AG04450 (cell line): ENCODE measurements at regions of chrX and their contacts with region 1.

Region 1: GRCh38 chrX:10189317-10190268 is 32.8 kb downstream of the CLCN4 start:
- DNase-seq: no peak
- H3K4me3 ChIP-seq: no peak overlapping the region
- H3K27ac ChIP-seq: no peak overlapping the region
- H3K27me3 ChIP-seq: no peaks in the 10 kb centered on the region
- CTCF ChIP-seq: peak; percentile 58

Region 2: GRCh38 chrX:10146346-10146745 is 43.2 kb before region 1 on chrX:
- CTCF ChIA-PET with region 1: no interaction called
- POLR2A ChIA-PET with region 1: no interaction called
- DNase-seq: no peak
- H3K4me3 ChIP-seq: no peak overlapping the region
- H3K27ac ChIP-seq: no peak overlapping the region
- H3K27me3 ChIP-seq: no peaks in the 10 kb centered on the region
- CTCF ChIP-seq: no peak

Region 3: GRCh38 chrX:10296576-10296975 is 107.0 kb after region 1 on chrX:
- CTCF ChIA-PET with region 1: no interaction called
- POLR2A ChIA-PET with region 1: no interaction called
- DNase-seq: peak; percentile 56
- H3K4me3 ChIP-seq: no peak overlapping the region
- H3K27ac ChIP-seq: no peak overlapping the region
- H3K27me3 ChIP-seq: no peaks in the 10 kb centered on the region
- CTCF ChIP-seq: no peak

Region 4: DNA sequence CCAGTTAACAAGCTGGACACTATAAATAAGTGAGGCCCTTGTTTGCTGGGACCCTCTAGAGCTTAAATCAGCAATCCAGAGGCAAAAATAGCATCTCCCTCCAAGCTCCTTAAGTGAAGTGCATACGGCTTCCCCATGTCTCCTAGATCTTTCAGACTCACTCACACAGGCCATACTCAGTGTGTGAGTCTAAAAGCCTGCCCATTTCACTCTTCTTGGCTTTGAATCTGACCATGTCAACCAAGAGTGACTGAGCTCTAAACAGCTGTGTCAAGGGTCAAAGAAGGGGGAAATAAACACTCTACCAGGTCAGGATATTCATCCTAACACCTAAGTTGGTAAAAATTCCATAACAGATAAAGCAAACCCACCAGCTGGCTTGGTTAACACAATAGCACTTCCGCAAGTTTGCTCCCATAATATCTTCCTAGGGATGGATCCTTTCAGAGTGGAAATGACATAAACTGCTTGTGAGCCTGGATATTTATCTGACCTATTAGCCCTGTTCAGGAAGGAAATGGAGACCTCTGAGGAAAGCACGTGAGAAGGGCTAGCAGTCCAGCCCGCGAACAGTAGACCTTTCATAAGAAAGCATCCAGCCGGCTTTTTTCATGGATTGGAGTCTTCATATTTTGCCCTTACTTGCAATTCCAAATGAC is 365.1 kb after region 1 on chrX:
- CTCF ChIA-PET with region 1: interaction called, 10 read pairs
- POLR2A ChIA-PET with region 1: no interaction called
- DNase-seq: no peak
- H3K4me3 ChIP-seq: no peak overlapping the region
- H3K27ac ChIP-seq: no peak overlapping the region
- H3K27me3 ChIP-seq: no peaks in the 10 kb centered on the region
- CTCF ChIP-seq: no peak

Region 5: GRCh38 chrX:10608099-10608498 is 418.5 kb after region 1 on chrX:
- CTCF ChIA-PET with region 1: interaction called, 11 read pairs
- POLR2A ChIA-PET with region 1: no interaction called
- DNase-seq: peak; percentile 56
- H3K4me3 ChIP-seq: no peak overlapping the region
- H3K27ac ChIP-seq: no peak overlapping the region
- H3K27me3 ChIP-seq: no peaks in the 10 kb centered on the region
- CTCF ChIP-seq: no peak

Region 6: DNA sequence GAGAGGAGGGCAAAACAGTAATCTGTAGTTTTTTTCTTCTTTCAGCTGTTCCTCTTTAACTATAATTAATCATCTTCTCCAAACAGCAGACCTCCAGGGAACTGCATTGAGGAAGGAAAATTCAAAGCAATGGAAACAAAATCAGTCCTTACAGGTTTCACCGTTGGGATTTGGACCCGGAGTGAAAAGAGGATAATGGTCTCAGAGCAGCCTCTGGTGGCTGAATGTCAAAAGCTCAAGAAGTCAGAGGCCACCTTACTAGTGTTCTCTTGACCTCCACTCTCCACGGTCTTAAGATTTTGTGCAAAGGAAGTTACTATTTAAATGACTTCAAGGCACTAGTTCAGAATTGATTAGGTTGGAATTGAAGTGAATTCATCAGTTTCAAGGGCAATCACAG is 446.7 kb after region 1 on chrX:
- CTCF ChIA-PET with region 1: interaction called, 64 read pairs
- POLR2A ChIA-PET with region 1: no interaction called
- DNase-seq: no peak
- H3K4me3 ChIP-seq: no peak overlapping the region
- H3K27ac ChIP-seq: no peak overlapping the region
- H3K27me3 ChIP-seq: no peaks in the 10 kb centered on the region
- CTCF ChIP-seq: peak; percentile 72

Region 7: GRCh38 chrX:10769195-10769594 is 579.6 kb after region 1 on chrX:
- CTCF ChIA-PET with region 1: interaction called, 19 read pairs
- POLR2A ChIA-PET with region 1: no interaction called
- DNase-seq: no peak
- H3K4me3 ChIP-seq: peak overlapping the region; percentile 41; the same call in 1 of the 2 replicates
- H3K27ac ChIP-seq: peak overlapping the region; percentile 52
- H3K27me3 ChIP-seq: no peaks in the 10 kb centered on the region
- CTCF ChIP-seq: peak; percentile 54

Region 8: GRCh38 chrX:11137543-11138139 is 948.0 kb after region 1 on chrX:
- CTCF ChIA-PET with region 1: interaction called, 65 read pairs
- POLR2A ChIA-PET with region 1: no interaction called
- DNase-seq: peak; percentile 6
- H3K4me3 ChIP-seq: no peak overlapping the region
- H3K27ac ChIP-seq: no peak overlapping the region
- H3K27me3 ChIP-seq: no peaks in the 10 kb centered on the region
- CTCF ChIP-seq: peak; percentile 53